ENCODE measurements at regions of chr10 and their contacts with region 1.

Region 1: GRCh38 chr10:102225646-102226541 is at the start of gene ELOVL3:
- DNase-seq: peak; percentile 94 to 96 (median 95)
- ATAC-seq: peak; percentile 96 to 99 (median 98)
- H3K4me3 ChIP-seq: peak within 1 kb of the TSS in 10 of 12 donors; percentile 22 to 53 (median 42)
- H3K27ac ChIP-seq: peak within 1 kb of the TSS; percentile 43 to 82 (median 76)
- H3K4me1 ChIP-seq: peaks cover 0 to 32% (median 24%) of the 10 kb centered on the region in 12 donors
- H3K27me3 ChIP-seq: peaks cover under 1 to 17% (median 8%) of the 10 kb centered on the region in 9 donors
- CTCF ChIP-seq: peak in 1 of 12 donors; percentile 12
- POLR2A ChIP-seq: peak in 1 of 2 donors; percentile 47
- total RNA-seq, gene ELOVL3: 0.20 to 0.25 TPM in 2 of 9 donors, not detected in the others

Region 2: GRCh38 chr10:102352066-102352715 is 126.3 kb after region 1 on chr10:
- intact Hi-C with region 1: loop called (anchors 1 to 2 kb)
- DNase-seq: peak in 4 of 5 donors; percentile 35 to 50 (median 46)
- ATAC-seq: peak in 3 of 4 donors; percentile 54 to 72 (median 68)
- H3K4me3 ChIP-seq: no peak overlapping the region
- H3K27ac ChIP-seq: no peak overlapping the region
- H3K4me1 ChIP-seq: peaks cover 0 to 7% (median 0%) of the 10 kb centered on the region in 12 donors
- H3K27me3 ChIP-seq: no peaks in the 10 kb centered on the region
- CTCF ChIP-seq: peak; percentile 80 to 95 (median 90)
- POLR2A ChIP-seq: no peak

Region 3: DNA sequence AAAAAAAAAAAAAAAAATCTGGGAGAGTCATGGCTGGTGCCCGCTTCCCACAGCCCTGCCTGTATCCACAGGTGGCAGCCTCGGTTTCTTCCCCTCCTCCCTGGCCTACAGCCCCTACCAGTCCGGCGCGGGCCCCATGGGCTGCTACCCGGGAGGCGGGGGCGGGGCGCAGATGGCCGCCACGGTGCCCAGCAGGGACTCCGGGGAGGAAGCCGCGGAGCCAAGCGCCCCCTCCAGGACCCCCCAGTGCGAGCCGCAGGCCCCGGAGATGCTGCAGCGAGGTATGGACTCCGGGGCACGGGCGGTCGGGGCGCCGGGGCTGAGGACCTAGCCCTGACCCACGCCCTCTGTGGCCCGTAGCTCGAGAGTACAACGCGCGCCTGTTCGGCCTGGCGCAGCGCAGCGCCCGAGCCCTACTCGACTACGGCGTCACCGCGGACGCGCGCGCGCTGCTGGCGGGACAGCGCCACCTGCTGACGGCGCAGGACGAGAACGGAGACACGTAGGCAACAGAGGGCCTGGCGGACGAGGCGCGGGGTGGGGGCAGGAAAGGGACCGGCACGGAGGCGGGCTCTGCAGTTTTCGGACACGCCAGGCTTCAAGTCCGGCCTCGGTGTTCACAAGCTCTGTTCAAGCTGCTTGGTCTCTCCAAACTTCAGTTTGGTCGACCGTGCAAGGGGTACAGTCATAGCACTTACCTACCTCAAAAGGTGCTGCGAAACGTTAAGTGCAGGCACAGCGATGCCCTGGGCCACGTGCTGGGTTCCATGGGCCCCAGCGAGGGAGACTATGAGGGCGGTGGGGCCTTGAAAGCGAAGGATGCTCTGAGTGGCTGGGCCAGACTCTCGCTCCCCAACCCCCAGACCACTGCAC is 173.6 kb after region 1 on chr10:
- intact Hi-C with region 1: loop called in 6 of 10 experiments (anchors 2 to 5 kb)
- DNase-seq: peak; percentile 87 to 95 (median 92)
- ATAC-seq: peak; percentile 60 to 80 (median 73)
- H3K4me3 ChIP-seq: peak overlapping the region; percentile 18 to 85 (median 70)
- H3K27ac ChIP-seq: peak overlapping the region; percentile 70 to 99 (median 86)
- H3K4me1 ChIP-seq: peaks cover 0 to 44% (median 26%) of the 10 kb centered on the region in 12 donors
- H3K27me3 ChIP-seq: no peaks in the 10 kb centered on the region
- CTCF ChIP-seq: peak; percentile 92 to 99 (median 95)
- POLR2A ChIP-seq: peak in 1 of 2 donors; percentile 46

Region 4: DNA sequence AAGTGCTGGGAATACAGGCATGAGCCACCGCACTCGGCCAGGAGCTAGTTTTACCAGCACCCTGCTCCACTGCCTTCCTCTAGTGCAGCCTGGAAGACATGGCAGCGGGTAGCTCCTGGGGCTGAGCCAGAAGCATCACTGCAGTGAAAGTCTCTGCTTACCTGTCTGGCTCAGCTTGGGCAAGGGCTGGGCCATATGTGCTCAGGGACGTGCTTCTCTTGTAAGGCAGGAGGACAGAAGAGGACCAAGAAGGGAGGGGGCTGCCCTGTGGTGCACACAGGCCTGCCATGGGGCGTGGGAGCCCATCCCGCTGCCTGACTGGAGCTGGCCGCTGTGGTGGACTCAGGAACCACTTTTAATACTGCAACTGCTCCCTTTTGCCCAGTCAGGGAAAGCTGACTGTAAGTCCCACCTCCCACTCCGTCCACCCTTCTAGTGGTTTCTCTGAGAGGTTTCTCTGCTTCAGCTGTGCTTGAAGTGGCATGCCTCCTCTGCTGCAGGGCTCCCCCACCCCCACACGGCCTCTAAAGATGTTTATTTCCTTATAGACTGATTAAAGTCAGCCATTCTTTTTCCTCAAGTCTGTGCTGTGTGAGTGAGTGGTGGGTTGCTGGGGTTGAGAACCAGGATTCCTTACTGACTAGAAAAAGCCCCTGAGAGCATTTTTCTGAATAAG is 250.7 kb after region 1 on chr10:
- intact Hi-C with region 1: loop called in 1 of 10 experiments (anchors 5 kb)
- DNase-seq: peak in 2 of 5 donors; percentile 20 to 23
- ATAC-seq: no peak
- H3K4me3 ChIP-seq: no peak overlapping the region
- H3K27ac ChIP-seq: no peak overlapping the region
- H3K4me1 ChIP-seq: peaks cover 0 to 18% (median 6%) of the 10 kb centered on the region in 12 donors
- H3K27me3 ChIP-seq: no peaks in the 10 kb centered on the region
- CTCF ChIP-seq: no peak
- POLR2A ChIP-seq: no peak

Measured in heart left ventricle (tissue), 16 donors.